ENCODE measurements at regions of chr9 and their contacts with region 1.

Region 1: GRCh38 chr9:91720751-91721705 is 229.0 kb downstream of the ROR2 start:
- DNase-seq: no peak
- H3K4me3 ChIP-seq: no peak overlapping the region
- H3K27ac ChIP-seq: no peak overlapping the region
- H3K4me1 ChIP-seq: peaks cover 0 to 4% (median 0%) of the 10 kb centered on the region in 4 experiments; a peak in 1 of 7 replicates
- H3K27me3 ChIP-seq: no peaks in the 10 kb centered on the region
- CTCF ChIP-seq: no peak
- EP300 ChIP-seq: no peak
- POLR2A ChIP-seq: no peak
- RAD21 ChIP-seq: no peak

Region 2: GRCh38 chr9:91698266-91698665 is 22.8 kb before region 1 on chr9:
- CTCF ChIA-PET with region 1: no interaction called
- POLR2A ChIA-PET with region 1: no interaction called
- DNase-seq: no peak
- H3K4me3 ChIP-seq: no peak overlapping the region
- H3K27ac ChIP-seq: no peak overlapping the region
- H3K4me1 ChIP-seq: peaks cover 2 to 10% (median 6%) of the 10 kb centered on the region in 4 experiments; a peak in 4 of 7 replicates
- H3K27me3 ChIP-seq: no peaks in the 10 kb centered on the region
- CTCF ChIP-seq: no peak
- EP300 ChIP-seq: no peak
- POLR2A ChIP-seq: no peak
- RAD21 ChIP-seq: no peak

Region 3: DNA sequence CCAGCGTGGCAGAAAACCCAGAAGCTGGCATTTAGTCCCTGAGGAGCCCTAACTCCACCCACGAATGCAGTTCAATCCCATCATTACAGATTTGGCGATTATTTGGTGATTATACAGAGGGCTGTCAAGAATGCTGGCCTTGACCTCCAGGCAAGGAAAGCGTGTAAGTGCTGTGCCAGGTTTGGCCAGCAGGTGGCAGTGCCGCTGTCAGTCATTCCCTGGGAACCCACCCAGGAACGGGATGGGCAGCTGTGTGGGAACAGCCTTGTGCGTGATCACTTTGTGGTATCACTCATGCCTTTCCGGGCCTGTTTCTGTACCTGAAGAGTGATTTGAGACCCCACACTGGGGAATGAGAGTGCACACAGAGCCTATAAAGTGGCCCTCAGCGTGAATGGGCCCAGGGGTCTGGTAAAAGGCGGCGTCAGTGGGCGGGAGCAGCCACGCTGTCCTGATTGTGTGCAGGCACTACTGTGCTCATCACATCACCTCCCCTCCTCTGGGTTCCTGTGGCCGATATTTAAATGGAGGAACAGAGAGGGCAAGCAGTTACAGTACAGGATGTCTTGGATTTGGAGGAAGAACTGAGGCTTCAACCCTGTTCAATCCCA is 13.4 kb after region 1 on chr9:
- CTCF ChIA-PET with region 1: interaction called, 20 read pairs
- POLR2A ChIA-PET with region 1: no interaction called
- DNase-seq: peak; percentile 23 to 96
- H3K4me3 ChIP-seq: no peak overlapping the region
- H3K27ac ChIP-seq: no peak overlapping the region
- H3K4me1 ChIP-seq: no peaks in the 10 kb centered on the region; a peak in 1 of 7 replicates
- H3K27me3 ChIP-seq: no peaks in the 10 kb centered on the region
- CTCF ChIP-seq: peak; percentile 81 to 99 (median 99)
- EP300 ChIP-seq: no peak
- POLR2A ChIP-seq: no peak
- RAD21 ChIP-seq: peak; percentile 65 to 73

Region 4: GRCh38 chr9:91790917-91791316 is 69.9 kb after region 1 on chr9:
- CTCF ChIA-PET with region 1: no interaction called
- POLR2A ChIA-PET with region 1: no interaction called
- DNase-seq: no peak
- H3K4me3 ChIP-seq: no peak overlapping the region
- H3K27ac ChIP-seq: no peak overlapping the region
- H3K4me1 ChIP-seq: no peaks in the 10 kb centered on the region
- H3K27me3 ChIP-seq: no peaks in the 10 kb centered on the region
- CTCF ChIP-seq: no peak
- EP300 ChIP-seq: no peak
- POLR2A ChIP-seq: no peak
- RAD21 ChIP-seq: no peak

Measured in H1 (cell line).